ENCODE measurements at regions of chr5 and their contacts with region 1.

Region 1: DNA sequence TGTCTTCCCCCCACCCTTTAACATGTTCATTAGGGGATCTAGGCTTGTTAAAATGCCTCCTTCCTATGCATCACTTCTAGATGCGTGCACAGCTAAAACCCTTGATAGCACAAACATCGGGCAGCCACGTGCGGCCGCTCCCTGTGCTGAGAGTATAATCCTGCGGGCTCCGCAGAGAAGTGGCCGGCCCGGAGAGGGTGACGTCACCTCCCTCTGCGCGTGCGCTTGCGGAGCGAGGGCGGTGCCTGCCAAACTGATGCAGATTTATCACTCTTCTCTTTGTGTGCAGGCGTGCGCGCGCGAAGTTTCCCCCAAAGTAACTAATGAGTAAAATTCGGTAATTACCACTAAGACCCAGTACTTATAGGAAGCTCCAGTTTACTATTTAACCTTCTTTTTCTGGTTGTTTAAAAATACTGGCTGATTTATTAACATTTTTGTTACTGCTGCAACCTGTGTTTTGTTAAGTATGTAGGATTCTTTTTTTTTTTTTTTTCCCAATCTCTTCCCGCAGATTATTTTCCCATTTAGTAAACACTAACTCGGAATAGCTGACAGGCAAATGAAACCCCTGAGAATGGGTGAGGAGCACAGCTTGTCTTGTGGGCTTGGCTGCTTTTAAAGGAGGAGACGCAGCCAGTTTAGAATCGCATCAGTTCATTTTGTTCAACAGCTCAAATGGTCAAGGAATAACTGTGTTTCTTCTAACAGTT is 121.6 kb downstream of the TRIO start:
- DNase-seq: peak; percentile 91
- ATAC-seq: peak; percentile 100
- H3K4me3 Mint-ChIP-seq: peak overlapping the region; percentile 35
- H3K27ac Mint-ChIP-seq: no peak overlapping the region
- H3K4me1 Mint-ChIP-seq: peaks cover 21% of the 10 kb centered on the region
- H3K27me3 Mint-ChIP-seq: peaks cover 16% of the 10 kb centered on the region

Region 2: DNA sequence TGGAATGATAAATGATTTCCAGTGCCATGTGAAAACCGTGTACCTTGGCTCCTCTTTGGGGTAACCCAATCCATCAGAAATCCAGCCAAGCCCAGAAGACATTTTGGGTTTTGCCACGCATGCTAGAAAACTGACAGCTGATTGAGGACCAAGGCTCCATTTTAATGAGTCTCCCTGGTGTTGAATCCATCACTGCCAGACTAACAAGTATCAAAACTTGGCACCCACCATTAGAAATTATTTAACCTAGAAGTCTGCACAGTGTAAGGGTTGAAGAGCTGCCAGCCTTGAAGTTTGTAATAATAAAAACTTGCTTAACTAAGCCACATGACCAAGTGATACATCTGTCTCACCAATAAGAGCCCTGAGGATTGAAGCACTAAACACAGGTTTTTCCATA is 690.2 kb before region 1 on chr5:
- CTCF ChIA-PET with region 1: no interaction called
- POLR2A ChIA-PET with region 1: no interaction called
- intact Hi-C with region 1: no loop called
- DNase-seq: no peak
- ATAC-seq: no peak
- H3K4me3 Mint-ChIP-seq: no peak overlapping the region
- H3K27ac Mint-ChIP-seq: no peak overlapping the region
- H3K4me1 Mint-ChIP-seq: no peaks in the 10 kb centered on the region
- H3K27me3 Mint-ChIP-seq: no peaks in the 10 kb centered on the region

Region 3: DNA sequence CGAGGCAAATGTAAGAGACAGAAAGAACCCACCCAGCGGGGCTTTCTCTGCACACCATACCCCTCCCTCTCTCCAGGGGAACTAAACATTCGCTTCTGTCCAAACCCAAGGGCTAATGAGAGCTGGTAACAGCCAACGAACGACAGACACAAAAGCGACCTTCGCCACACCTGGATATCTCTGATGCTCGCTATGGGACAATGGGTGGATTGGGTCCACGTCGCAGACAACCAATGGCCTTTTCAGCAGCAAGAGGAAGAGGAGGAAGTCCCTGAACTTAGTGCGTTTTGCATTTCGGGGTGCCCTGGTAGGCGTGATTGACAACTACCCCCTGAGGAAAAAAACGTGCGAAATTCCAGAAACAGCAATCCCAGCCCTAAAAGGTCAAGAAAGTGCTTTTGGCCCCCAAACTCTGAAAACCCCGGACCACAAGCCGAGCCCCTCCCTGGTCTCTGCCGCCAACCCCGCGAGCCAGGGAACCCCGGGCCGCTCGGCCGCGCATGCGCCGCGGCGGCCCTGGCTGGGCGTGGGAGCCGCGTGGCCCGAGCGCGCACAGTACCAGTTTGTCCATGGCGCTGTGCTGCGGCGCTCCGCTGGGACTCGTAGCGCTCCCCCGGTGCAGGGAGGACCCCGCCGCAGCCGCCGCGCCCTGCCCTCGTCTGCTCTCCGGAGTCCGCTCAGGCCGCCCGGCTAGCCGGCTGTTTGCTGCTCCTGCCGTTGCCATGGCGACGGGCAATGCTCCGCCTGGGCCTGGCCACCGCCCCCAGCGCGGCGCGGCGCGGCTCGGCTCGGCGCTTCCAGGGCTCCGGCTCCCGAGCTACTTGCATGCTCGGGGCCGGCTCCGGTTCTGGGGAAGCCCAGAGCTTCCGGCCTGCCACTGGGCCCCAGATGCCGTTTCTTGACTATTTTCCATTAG is 253.4 kb before region 1 on chr5:
- CTCF ChIA-PET with region 1: interaction called, 3 read pairs
- POLR2A ChIA-PET with region 1: no interaction called
- intact Hi-C with region 1: loop called in 1 of 2 experiments (anchors 1 kb)
- DNase-seq: peak; percentile 77
- ATAC-seq: peak; percentile 95
- H3K4me3 Mint-ChIP-seq: peak overlapping the region; percentile 71
- H3K27ac Mint-ChIP-seq: no peak overlapping the region
- H3K4me1 Mint-ChIP-seq: peaks cover 8% of the 10 kb centered on the region
- H3K27me3 Mint-ChIP-seq: peaks cover 22% of the 10 kb centered on the region

Region 4: DNA sequence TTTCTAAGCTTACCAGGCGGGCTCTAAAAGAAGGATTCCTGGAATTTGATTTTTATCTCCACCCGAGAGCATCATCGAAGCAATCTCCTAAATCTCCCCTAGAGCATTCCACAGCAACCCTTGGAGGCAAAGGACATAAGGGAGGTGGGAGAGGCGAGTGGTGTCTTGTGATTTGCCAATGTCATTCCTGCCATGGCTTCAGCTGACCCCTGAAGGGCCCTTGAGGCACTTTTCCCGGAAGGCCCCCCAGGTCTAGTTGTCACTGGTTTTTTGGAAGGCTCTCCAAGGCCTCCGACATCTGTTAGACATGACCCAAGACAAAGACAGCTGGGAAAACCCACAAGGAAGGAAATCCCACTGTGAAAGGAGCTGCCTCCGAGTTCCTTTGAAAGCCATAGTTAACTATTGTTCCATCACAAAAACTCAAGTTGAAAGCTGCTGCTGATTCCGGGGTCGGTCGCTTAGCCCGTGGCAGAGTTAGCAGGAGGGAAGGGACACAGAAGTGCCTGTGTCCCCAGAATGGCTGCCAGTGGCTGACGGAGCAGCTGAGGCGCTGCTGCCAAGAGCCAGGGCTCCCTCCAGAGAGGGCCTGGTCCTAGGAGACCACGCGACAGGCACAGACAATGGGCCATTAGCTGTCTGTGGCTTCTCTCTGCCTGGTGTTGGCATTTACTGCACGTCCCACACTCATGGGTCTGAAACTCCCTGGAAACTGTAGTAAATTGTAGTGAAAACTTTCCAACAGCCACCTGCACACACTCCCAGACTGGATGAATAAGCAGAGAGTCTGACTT is 146.0 kb before region 1 on chr5:
- CTCF ChIA-PET with region 1: no interaction called
- POLR2A ChIA-PET with region 1: no interaction called
- intact Hi-C with region 1: loop called in 1 of 2 experiments (anchors 10 kb)
- DNase-seq: no peak
- ATAC-seq: no peak
- H3K4me3 Mint-ChIP-seq: no peak overlapping the region
- H3K27ac Mint-ChIP-seq: no peak overlapping the region
- H3K4me1 Mint-ChIP-seq: no peaks in the 10 kb centered on the region
- H3K27me3 Mint-ChIP-seq: no peaks in the 10 kb centered on the region

Region 5: DNA sequence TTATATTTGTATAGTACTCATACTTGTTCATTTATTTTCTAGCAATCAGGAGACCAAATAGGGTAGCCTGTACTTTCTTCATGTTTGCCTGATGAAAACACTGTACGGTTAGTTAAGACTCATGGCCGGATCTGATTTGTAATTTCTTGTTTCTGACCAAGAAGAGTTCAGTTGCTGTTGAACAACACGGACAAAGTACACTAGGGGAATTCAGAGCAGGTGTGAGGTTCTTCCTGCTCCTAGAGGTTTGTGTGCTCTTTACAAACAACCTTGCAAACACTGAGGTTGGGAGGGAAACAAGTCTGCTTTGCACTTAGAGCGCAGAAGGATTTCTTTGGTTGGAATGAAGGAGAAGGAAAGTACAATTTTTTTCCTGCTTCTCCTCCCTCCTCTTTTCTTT is 51.9 kb before region 1 on chr5:
- CTCF ChIA-PET with region 1: no interaction called
- POLR2A ChIA-PET with region 1: no interaction called
- intact Hi-C with region 1: no loop called
- DNase-seq: no peak
- ATAC-seq: no peak
- H3K4me3 Mint-ChIP-seq: no peak overlapping the region
- H3K27ac Mint-ChIP-seq: no peak overlapping the region
- H3K4me1 Mint-ChIP-seq: peaks cover 5% of the 10 kb centered on the region
- H3K27me3 Mint-ChIP-seq: peaks cover 2% of the 10 kb centered on the region